ENCODE measurements at regions of chr1 and their contacts with region 1.

Region 1: DNA sequence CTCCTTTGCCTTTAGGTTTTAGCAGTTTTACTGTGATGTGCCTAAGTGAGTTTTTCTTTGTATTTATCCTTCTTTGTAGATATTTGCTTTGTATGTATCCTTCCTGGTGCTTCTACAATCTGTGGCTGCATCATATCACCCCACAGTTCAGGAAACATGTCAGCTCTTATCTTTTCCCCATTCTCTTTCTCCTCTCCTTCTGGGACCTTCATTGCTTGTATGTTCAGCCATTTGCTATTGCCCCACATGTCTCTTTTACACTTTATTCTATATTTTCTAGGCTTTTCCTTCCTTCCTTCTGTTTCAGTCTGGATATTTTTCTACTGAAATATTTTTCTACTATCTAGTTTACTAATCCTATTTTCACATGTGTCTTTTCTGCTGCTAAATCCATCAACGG is 14.9 kb downstream of the KNCN start:
- DNase-seq: no peak
- H3K4me3 Mint-ChIP-seq: no peak overlapping the region
- H3K27ac Mint-ChIP-seq: no peak overlapping the region
- H3K4me1 Mint-ChIP-seq: peaks cover 2% of the 10 kb centered on the region
- H3K27me3 Mint-ChIP-seq: peaks cover 46% of the 10 kb centered on the region

Region 2: DNA sequence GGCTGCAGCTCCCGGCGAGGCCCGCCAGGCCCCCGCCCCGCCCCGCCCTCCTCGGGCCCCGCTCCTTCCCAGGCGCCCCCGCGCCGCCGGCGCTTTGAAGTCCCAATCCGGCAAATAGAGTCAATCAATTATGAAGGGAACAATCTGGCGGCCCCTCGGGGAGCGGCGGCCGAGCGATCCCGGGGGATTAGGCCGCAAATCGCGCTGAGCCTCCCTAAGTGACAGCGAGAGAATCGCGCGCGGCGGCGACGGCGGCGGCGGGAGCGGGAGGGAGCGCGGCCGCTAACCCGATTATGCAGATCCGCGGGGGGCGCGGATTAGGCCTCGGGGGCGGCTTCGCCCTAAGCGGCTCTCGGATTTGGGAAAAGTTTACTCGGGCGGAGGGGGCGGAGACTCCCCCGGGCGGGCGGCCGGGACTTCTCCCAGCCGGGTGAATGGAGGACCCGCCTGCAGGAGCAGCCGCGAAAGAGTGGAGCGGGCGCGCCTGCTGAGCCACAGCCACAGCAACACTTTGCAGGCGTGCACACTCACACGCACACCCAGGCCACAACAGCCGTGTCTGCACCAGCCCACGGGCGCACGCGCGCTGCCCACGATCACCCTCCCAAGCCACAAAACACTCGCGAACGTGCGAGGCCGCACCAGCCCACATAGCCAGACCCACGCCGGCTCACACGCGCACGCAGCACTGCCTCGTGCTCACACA is 69.9 kb before region 1 on chr1:
- CTCF ChIA-PET with region 1: no interaction called
- POLR2A ChIA-PET with region 1: no interaction called
- DNase-seq: no peak
- H3K4me3 Mint-ChIP-seq: peak overlapping the region; percentile 70
- H3K27ac Mint-ChIP-seq: peak overlapping the region; percentile 27
- H3K4me1 Mint-ChIP-seq: peaks cover 12% of the 10 kb centered on the region
- H3K27me3 Mint-ChIP-seq: peaks cover 48% of the 10 kb centered on the region

Region 3: DNA sequence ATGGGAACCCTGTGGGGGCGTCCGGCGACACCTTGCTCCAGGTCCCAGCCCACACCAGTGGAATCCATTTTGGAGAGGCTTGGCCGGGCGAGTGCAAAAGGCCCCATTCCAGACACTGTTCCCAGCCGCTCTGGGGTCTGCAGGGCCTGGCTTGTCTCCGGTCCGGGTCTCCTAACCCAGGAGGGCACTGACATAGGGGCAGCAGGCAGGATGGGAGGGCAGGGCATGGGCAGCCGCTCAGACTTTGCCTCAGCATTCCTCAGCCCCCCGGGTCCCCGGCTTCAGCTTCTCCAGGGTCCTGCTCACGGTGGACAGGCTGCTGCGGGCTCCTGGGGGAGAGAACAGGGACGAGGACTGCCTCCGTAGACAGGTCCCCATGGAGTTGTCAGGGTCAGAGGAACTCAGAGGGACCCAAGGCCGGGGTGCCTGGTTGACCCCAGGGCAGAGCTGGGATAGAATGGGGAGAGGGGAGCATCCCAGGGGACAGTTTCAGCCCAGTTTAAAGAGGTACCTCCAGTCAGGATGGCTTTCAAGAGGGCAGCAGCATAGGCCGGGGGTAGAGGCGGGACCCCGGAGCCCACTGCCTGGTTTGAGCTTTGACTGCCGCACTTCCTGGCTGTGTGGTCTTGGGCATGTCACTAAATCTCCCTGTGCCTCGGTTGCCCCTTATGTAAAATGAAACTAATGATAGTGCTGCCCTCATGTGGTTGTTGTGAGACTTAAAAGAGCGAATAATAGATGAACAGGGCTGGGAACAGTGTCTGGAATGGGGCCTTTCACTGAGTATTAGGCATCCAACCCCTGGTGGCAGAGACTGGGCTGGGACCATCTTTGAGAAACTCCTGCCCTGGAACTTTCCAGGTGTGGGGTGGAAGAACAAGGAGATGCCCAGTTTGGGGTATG is 11.2 kb after region 1 on chr1:
- CTCF ChIA-PET with region 1: interaction called, 22 read pairs
- POLR2A ChIA-PET with region 1: no interaction called
- DNase-seq: no peak
- H3K4me3 Mint-ChIP-seq: no peak overlapping the region
- H3K27ac Mint-ChIP-seq: no peak overlapping the region
- H3K4me1 Mint-ChIP-seq: peaks cover 16% of the 10 kb centered on the region
- H3K27me3 Mint-ChIP-seq: peaks cover 35% of the 10 kb centered on the region

Region 4: DNA sequence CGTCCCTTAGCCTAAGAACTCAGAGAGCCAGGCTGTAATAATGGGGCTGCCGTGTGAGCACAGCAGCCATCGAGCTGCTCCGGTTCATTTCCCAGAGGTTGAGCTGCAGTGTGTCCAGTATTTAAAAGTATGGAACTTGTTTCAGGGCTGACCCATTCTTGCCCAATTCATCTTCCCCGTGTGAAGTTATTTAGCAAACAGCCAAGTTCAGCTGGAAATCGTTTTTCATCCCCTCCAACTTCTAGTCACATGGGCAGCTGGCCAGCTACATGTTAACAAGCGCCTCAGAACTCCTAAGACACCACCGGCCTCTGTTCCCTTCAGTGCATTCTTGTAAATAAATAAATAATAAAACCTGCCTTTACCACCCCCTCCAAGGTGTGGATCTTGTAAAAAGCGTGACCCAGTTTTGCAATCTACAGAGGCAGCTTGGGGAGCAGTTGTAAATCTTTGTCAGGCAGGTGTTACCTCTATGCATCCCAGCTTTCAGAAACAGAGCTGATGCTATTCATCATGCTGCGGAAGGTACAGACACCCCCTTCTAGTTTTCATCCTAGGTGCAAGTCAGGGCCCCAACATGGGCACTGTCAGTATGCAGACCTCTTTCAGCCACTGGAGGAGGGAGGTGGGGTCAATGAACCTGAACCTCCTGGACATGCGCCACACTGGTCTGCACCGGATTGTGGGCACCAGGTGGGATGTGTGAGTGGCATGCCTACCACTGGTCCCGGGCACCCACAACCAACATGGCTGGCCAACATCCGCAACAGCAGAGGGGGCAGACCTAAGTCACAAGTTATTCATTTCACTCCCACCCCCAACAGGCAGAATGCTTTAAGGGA is 33.6 kb after region 1 on chr1:
- CTCF ChIA-PET with region 1: no interaction called
- POLR2A ChIA-PET with region 1: no interaction called
- DNase-seq: no peak
- H3K4me3 Mint-ChIP-seq: no peak overlapping the region
- H3K27ac Mint-ChIP-seq: no peak overlapping the region
- H3K4me1 Mint-ChIP-seq: peaks cover 8% of the 10 kb centered on the region
- H3K27me3 Mint-ChIP-seq: no peaks in the 10 kb centered on the region

Region 5: GRCh38 chr1:46587069-46587468 is 50.5 kb after region 1 on chr1:
- CTCF ChIA-PET with region 1: no interaction called
- POLR2A ChIA-PET with region 1: no interaction called
- DNase-seq: no peak
- H3K4me3 Mint-ChIP-seq: no peak overlapping the region
- H3K27ac Mint-ChIP-seq: no peak overlapping the region
- H3K4me1 Mint-ChIP-seq: peaks cover 33% of the 10 kb centered on the region
- H3K27me3 Mint-ChIP-seq: no peaks in the 10 kb centered on the region

Region 6: GRCh38 chr1:46667782-46668760 is 131.5 kb after region 1 on chr1 and contains the start of gene ATPAF1:
- CTCF ChIA-PET with region 1: no interaction called
- POLR2A ChIA-PET with region 1: no interaction called
- DNase-seq: peak; percentile 67
- H3K4me3 Mint-ChIP-seq: peak within 1 kb of the TSS; percentile 86
- H3K27ac Mint-ChIP-seq: peak within 1 kb of the TSS; percentile 84
- H3K4me1 Mint-ChIP-seq: peaks cover 20% of the 10 kb centered on the region
- H3K27me3 Mint-ChIP-seq: no peaks in the 10 kb centered on the region
- total RNA-seq, gene ATPAF1: 49.0 to 50.6 TPM

Measured in activated CD4-positive, alpha-beta T cell treated with anti-CD3 and anti-CD28 coated beads, Interleukin-2, amount 10 ng/mL, durations not matched to agents 7 days and 5 days (primary cell).